RWPE1 (cell line): ENCODE measurements at regions of chr10 and their contacts with region 1.

Region 1: GRCh38 chr10:97531486-97531885 is 32.8 kb downstream of the UBTD1 start:
- DNase-seq: no peak
- H3K27ac ChIP-seq: peak overlapping the region; percentile 22; the same call in 1 of the 2 replicates
- CTCF ChIP-seq: no peak

Region 2: DNA sequence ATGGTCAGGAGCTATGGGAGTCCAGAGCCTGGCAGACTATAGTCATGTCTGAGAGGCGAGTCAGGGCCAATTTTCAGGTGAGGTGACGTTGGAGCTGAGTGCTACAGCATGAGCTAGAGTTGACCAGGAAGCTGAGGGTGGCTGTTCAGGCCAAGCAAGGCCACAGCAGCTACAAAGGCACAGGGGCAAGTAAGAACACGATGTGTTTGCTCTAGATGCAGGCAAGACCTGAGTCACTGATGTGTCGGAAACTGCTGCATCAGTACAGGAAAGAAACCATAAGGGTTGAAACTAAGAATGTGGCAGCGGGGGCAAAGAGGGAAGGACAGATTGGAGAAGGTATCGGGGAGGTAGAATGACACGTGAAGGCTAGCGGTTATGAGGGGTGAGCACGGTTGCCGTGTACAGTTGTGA is 118.6 kb before region 1 on chr10:
- CTCF ChIA-PET with region 1: no interaction called
- POLR2A ChIA-PET with region 1: no interaction called
- DNase-seq: peak; percentile 94
- H3K27ac ChIP-seq: peak overlapping the region; percentile 86
- CTCF ChIP-seq: no peak

Region 3: DNA sequence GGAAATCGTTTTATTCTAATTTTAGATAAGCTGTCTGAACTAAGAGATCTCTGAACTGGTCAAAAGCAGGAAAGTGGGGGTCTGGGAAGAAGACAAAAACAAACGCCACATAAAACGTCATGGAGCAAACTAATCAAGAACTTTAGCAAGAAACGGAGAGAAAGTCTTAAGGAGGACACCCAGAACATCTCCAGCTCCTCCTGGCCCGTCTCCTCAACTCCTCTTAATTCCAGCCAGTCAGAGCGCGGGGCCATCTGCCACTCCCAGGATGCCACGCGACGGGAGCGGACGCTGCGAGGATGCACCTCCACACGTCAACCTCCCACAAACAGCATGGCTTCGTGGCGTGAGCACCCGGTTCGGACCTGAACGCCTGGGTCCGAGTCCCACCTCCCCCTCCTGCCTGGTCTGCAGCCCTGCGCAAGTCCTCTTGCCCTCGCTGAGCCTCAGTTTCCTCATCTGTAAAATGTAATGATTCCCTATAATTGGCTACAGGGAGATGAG is 33.9 kb before region 1 on chr10:
- CTCF ChIA-PET with region 1: no interaction called
- POLR2A ChIA-PET with region 1: interaction called, 14 read pairs
- DNase-seq: peak; percentile 94
- H3K27ac ChIP-seq: peak overlapping the region; percentile 96
- CTCF ChIP-seq: no peak

Region 4: DNA sequence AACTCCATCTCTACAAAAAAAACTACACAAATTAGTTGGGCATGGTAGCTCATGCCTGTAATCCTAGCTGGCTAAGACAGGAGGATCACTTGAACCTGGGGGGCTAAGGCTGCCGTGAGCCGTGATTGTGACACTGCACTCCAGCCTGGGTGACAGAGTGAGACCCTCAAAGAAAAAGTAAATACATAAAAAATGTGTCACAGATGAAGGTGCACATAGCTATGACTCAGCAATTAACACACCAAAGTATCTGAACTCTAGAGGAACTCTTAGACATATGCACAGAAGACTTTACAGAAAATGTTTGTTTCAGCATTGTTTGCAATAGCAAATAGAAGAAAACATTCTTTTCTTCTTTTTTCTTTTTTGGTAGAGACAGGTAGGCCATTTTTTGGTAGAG is 66.3 kb after region 1 on chr10:
- CTCF ChIA-PET with region 1: no interaction called
- POLR2A ChIA-PET with region 1: no interaction called
- DNase-seq: no peak
- H3K27ac ChIP-seq: peak overlapping the region; percentile 47
- CTCF ChIP-seq: no peak